Dorsolateral prefrontal cortex (tissue), 120 donors: ENCODE measurements at regions of chr10 and their contacts with region 1.

Region 1: GRCh38 chr10:22988581-22989360 is 60.9 kb downstream of the ARMC3 start:
- DNase-seq: peak in 8 of 10 donors; percentile 34 to 70 (median 52)
- H3K4me3 ChIP-seq: peak overlapping the region in 43 of 59 donors; percentile 0 to 44 (median 24)
- H3K27ac ChIP-seq: peak overlapping the region in 44 of 59 donors; percentile 3 to 88 (median 60)
- H3K27me3 ChIP-seq: no peaks in the 10 kb centered on the region
- CTCF ChIP-seq: peak; percentile 88 to 100 (median 97)

Region 2: GRCh38 chr10:21995557-21995956 is 993.2 kb before region 1 on chr10:
- intact Hi-C with region 1: loop called (anchors 5 kb)
- DNase-seq: no peak
- H3K4me3 ChIP-seq: peak overlapping the region in 1 of 59 donors; percentile 9
- H3K27ac ChIP-seq: peak overlapping the region in 3 of 59 donors; percentile 7 to 25 (median 22)
- H3K27me3 ChIP-seq: no peaks in the 10 kb centered on the region
- CTCF ChIP-seq: no peak

Region 3: GRCh38 chr10:22251751-22252223 is 737.0 kb before region 1 on chr10:
- intact Hi-C with region 1: loop called in 1 of 2 experiments (anchors 10 kb)
- DNase-seq: peak; percentile 28 to 68 (median 64)
- H3K4me3 ChIP-seq: peak overlapping the region; percentile 56 to 96 (median 81)
- H3K27ac ChIP-seq: peak overlapping the region; percentile 97 to 100 (median 99)
- H3K27me3 ChIP-seq: no peaks in the 10 kb centered on the region
- CTCF ChIP-seq: peak in 1 of 56 donors; percentile 11

Region 4: GRCh38 chr10:22436884-22437619 is 551.7 kb before region 1 on chr10:
- intact Hi-C with region 1: loop called (anchors 5 kb)
- DNase-seq: peak; percentile 84 to 91 (median 88)
- H3K4me3 ChIP-seq: peak overlapping the region; percentile 48 to 93 (median 80)
- H3K27ac ChIP-seq: peak overlapping the region; percentile 78 to 99 (median 98)
- H3K27me3 ChIP-seq: no peaks in the 10 kb centered on the region
- CTCF ChIP-seq: peak in 43 of 56 donors; percentile 9 to 55 (median 31)

Region 5: DNA sequence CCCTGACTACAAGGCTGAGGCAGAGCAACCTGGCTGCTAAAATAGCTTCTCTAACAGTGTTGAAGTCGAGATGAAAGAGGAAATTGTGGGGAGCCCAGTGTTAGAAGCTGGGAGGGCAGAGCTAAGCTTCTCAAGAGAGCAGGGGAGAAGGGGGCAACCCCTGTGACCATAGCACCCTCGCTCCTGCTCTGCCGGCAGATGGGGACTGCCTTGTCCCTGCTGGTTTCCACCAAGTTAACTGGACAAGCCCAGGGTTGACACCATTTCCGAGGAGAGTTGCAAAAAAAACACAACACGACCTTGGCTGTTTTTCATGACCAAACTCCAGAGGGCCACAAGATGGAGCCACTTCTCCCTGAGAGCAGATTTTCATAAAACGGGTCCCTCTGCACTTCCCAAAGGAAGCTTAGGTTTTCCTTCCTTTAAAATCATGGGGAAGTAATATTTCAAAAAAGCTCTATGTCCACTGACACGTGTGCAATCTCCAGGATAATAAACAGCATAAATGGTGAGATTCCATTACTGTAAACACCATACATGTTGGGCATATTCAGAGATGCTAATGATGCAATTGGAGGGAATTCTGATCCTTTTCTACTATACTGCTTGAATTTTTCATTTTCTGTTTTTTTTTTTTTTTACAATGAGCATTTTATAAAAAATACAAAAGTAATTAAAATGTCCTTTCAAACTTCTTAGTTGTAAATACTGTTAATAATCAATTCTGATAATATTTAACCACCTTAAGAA is 414.8 kb before region 1 on chr10:
- intact Hi-C with region 1: loop called (anchors 10 kb)
- DNase-seq: no peak
- H3K4me3 ChIP-seq: no peak overlapping the region
- H3K27ac ChIP-seq: peak overlapping the region in 31 of 59 donors; percentile 2 to 89 (median 54)
- H3K27me3 ChIP-seq: no peaks in the 10 kb centered on the region
- CTCF ChIP-seq: peak in 50 of 56 donors; percentile 6 to 66 (median 45)

Region 6: DNA sequence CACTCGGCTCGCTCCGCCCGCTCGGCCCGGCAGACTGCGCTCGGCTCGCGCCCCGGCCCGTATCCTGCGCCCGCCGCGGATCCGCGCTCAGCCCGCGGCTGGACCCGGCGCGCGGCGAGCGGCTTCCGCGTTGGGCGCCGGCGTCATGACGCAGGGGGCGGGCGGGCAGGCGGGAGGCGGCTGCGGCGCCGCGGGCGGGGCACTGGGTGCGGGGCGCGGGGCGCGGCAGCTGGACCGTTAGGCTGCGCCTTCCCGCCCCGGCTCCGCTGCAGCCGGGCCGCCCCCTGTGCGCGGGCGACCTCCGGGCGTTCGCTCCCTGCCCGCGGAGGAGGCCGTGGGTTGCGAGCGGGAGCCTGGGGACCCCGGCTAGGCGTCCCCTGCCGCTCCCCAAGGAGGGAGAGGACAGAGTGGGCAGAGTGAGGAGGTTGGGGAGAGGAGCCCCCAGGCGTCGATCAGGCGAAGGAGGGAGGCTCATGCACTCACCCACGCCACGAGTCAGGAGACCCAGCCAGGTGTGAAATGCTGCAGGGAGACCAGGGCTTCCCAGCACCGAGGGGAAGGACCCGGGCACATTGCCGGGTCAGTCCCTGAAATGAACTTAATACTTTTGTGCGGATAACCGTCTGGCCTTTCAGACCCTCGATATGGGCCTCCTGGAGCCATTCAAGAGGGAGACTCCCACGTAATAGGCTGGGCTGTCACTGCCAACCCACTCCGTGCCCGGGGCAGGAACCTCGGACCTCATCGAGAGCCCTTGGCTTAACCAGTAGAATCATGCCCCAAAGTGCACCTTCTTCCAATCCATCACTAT is 274.1 kb before region 1 on chr10 and contains the start of gene PIP4K2A:
- intact Hi-C with region 1: loop called (anchors 5 kb)
- DNase-seq: peak in 9 of 10 donors; percentile 40 to 87 (median 67)
- H3K4me3 ChIP-seq: peak within 1 kb of the TSS; percentile 59 to 99 (median 93)
- H3K27ac ChIP-seq: peak within 1 kb of the TSS; percentile 89 to 100 (median 97)
- H3K27me3 ChIP-seq: no peaks in the 10 kb centered on the region
- CTCF ChIP-seq: peak in 3 of 56 donors; percentile 13 to 28 (median 13)
- total RNA-seq, gene PIP4K2A: 77.5 to 992 (median 272) TPM

Region 7: GRCh38 chr10:23067939-23068775 is 79.4 kb after region 1 on chr10:
- intact Hi-C with region 1: loop called (anchors 2 kb)
- DNase-seq: peak; percentile 63 to 89 (median 80)
- H3K4me3 ChIP-seq: no peak overlapping the region
- H3K27ac ChIP-seq: peak overlapping the region in 23 of 59 donors; percentile 2 to 79 (median 40)
- H3K27me3 ChIP-seq: no peaks in the 10 kb centered on the region
- CTCF ChIP-seq: peak; percentile 65 to 96 (median 85)